CD8-positive, alpha-beta T cell (primary cell): ENCODE measurements at regions of chr15 and their contacts with region 1.

Region 1: DNA sequence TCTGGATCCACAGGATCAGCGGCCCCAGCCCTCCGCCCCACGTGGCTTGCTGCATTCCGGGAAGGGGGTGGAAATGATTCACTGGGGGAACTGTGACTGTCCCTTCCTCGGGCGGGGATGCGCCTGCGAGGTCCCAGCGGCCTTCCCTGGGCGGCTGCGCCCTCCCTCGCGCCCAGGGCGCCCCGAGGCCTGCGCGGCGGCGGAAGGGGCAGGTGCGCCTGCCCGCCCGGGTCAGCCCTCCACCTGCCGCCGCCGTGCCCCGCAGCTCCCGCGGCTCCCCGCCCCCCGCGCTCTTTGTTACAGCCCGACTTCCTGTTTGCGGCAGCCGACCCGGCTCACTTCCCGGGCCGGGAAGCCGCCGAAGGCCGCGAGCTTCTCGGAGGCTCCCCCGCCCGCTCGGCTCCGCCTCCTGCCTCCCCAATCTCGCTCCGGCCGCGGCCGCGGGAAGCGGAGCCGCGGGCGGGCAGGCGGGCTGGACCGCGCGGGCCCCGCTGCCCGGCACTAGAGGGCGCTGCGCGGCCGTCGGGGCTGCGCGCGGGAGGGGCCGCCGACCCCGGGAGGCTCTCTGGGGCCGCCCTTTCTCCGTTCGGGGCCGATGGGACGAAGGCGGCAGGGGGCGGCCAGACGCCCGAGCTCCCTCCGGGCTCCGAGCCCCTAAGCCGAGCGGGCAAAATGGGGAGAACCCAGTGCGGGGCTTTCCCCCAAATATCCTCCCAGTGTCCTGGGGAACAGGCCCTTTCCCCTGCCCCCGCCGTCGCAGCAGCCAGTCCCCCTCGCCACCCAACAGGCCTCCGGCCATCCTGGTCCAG is 11.5 kb upstream of the CHAC1 start:
- DNase-seq: peak in 8 of 9 experiments; percentile 56 to 84 (median 66)
- ATAC-seq: peak; percentile 72
- H3K4me3 ChIP-seq: peak overlapping the region; percentile 69 to 78
- H3K4me3 Mint-ChIP-seq: peak overlapping the region; percentile 86
- H3K27ac ChIP-seq: peak overlapping the region; percentile 30 to 64
- H3K27ac Mint-ChIP-seq: peak overlapping the region; percentile 30
- H3K4me1 ChIP-seq: peaks cover 29% of the 10 kb centered on the region
- H3K4me1 Mint-ChIP-seq: peaks cover 37% of the 10 kb centered on the region
- H3K27me3 ChIP-seq: no peaks in the 10 kb centered on the region
- H3K27me3 Mint-ChIP-seq: no peaks in the 10 kb centered on the region
- CTCF ChIP-seq: peak; percentile 40

Region 2: GRCh38 chr15:40914486-40914885 is 27.2 kb before region 1 on chr15:
- CTCF ChIA-PET with region 1: interaction called, 15 read pairs
- POLR2A ChIA-PET with region 1: no interaction called
- intact Hi-C with region 1: no loop called
- DNase-seq: no peak
- ATAC-seq: no peak
- H3K4me3 ChIP-seq: no peak overlapping the region
- H3K4me3 Mint-ChIP-seq: no peak overlapping the region
- H3K27ac ChIP-seq: no peak overlapping the region
- H3K27ac Mint-ChIP-seq: no peak overlapping the region
- H3K4me1 ChIP-seq: no peaks in the 10 kb centered on the region
- H3K4me1 Mint-ChIP-seq: peaks cover 1% of the 10 kb centered on the region
- H3K27me3 ChIP-seq: no peaks in the 10 kb centered on the region
- H3K27me3 Mint-ChIP-seq: no peaks in the 10 kb centered on the region
- CTCF ChIP-seq: no peak

Region 3: DNA sequence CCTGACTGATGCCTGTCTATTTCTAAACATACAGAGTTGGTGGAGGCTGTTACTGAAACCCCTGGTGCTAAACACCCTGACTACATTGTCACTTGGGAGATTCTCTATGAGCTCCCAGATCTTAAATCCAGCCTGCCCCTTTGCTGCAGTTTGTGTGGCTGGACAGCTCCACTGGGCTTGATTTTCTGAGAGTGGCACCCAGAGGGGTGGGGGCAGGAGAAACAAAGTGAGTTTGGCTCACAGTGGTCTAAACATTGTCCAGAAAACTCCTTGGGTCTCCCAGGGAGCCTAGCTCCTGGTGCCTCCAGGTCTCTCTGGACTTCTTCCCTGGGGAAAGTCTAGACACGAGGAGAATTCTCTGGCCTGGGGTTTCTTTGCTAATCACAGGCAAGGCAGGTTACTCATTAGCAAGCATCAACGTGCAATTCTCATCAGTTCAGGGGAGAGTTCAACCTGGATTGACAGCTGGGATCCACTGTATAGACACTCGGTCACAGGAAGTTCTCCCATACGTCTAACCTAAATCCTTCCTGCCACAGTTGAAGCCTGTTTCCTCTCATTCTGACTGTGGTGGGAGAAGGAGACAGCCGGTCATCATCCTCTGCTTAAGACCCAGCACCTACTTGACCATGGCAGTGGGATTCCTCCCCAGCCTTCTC is 19.7 kb before region 1 on chr15:
- CTCF ChIA-PET with region 1: interaction called, 69 read pairs
- POLR2A ChIA-PET with region 1: interaction called, 16 read pairs
- intact Hi-C with region 1: loop called in 1 of 2 experiments (anchors 2 kb)
- DNase-seq: no peak
- ATAC-seq: no peak
- H3K4me3 ChIP-seq: no peak overlapping the region
- H3K4me3 Mint-ChIP-seq: no peak overlapping the region
- H3K27ac ChIP-seq: no peak overlapping the region
- H3K27ac Mint-ChIP-seq: no peak overlapping the region
- H3K4me1 ChIP-seq: peaks cover 19% of the 10 kb centered on the region
- H3K4me1 Mint-ChIP-seq: peaks cover 18% of the 10 kb centered on the region
- H3K27me3 ChIP-seq: peaks cover 18 to 21% of the 10 kb centered on the region in 2 experiments
- H3K27me3 Mint-ChIP-seq: peaks cover 23% of the 10 kb centered on the region
- CTCF ChIP-seq: no peak

Region 4: DNA sequence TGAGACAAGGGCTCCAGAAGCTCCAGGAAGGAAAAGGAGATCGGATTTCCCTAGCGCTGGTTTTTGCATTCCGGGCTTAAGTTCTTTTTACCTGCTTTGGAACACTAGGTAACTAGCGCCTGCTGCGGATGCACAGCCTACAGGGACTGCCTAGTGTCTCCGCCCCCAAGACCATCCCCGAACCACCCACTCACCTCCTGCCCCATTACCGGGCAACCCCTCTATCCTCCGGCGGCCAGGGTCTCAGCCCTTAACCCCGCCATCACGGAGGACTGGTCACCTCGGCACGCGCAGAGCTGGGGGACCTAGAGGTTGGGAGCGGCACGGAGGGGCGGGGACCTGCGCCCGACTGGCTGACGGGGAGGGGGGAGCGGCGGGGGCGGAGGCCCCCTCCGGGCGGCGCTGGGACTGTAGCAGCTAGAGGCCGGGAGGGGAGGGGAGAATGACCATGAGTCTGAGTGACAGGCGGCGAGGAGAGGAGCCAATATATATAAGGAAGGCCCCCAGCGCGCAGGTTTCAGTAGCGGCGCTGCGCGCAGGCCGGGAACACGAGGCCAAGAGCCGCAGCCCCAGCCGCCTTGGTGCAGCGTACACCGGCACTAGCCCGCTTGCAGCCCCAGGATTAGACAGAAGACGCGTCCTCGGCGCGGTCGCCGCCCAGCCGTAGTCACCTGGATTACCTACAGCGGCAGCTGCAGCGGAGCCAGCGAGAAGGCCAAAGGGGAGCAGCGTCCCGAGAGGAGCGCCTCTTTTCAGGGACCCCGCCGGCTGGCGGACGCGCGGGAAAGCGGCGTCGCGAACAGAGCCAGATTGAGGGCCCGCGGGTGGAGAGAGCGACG is 12.7 kb before region 1 on chr15 and contains the start of gene DLL4:
- CTCF ChIA-PET with region 1: interaction called, 69 read pairs
- POLR2A ChIA-PET with region 1: interaction called, 16 read pairs
- intact Hi-C with region 1: loop called in 1 of 2 experiments (anchors 2 kb)
- DNase-seq: peak in 4 of 9 experiments; percentile 37 to 59 (median 50)
- ATAC-seq: peak; percentile 50
- H3K4me3 ChIP-seq: peak within 1 kb of the TSS; percentile 38 to 63
- H3K4me3 Mint-ChIP-seq: peak within 1 kb of the TSS; percentile 83
- H3K27ac ChIP-seq: no peak within 1 kb of the TSS
- H3K27ac Mint-ChIP-seq: no peak within 1 kb of the TSS
- H3K4me1 ChIP-seq: peaks cover 60% of the 10 kb centered on the region
- H3K4me1 Mint-ChIP-seq: peaks cover 51% of the 10 kb centered on the region
- H3K27me3 ChIP-seq: peaks cover 44 to 62% of the 10 kb centered on the region in 2 experiments
- H3K27me3 Mint-ChIP-seq: peaks cover 63% of the 10 kb centered on the region
- CTCF ChIP-seq: no peak
- total RNA-seq, gene DLL4: 0.08 TPM

Region 5: GRCh38 chr15:40952901-40953712 is 11.4 kb after region 1 on chr15 and contains the start of gene CHAC1:
- CTCF ChIA-PET with region 1: interaction called, 24 read pairs
- POLR2A ChIA-PET with region 1: interaction called, 28 read pairs
- intact Hi-C with region 1: loop called (anchors 1 kb)
- DNase-seq: peak; percentile 84 to 97 (median 94)
- ATAC-seq: peak; percentile 96
- H3K4me3 ChIP-seq: peak within 1 kb of the TSS; percentile 68 to 73
- H3K4me3 Mint-ChIP-seq: peak within 1 kb of the TSS; percentile 93
- H3K27ac ChIP-seq: peak within 1 kb of the TSS in 1 of 2 experiments; percentile 43
- H3K27ac Mint-ChIP-seq: peak within 1 kb of the TSS; percentile 73
- H3K4me1 ChIP-seq: peaks cover 12% of the 10 kb centered on the region
- H3K4me1 Mint-ChIP-seq: peaks cover 16% of the 10 kb centered on the region
- H3K27me3 ChIP-seq: no peaks in the 10 kb centered on the region
- H3K27me3 Mint-ChIP-seq: no peaks in the 10 kb centered on the region
- CTCF ChIP-seq: peak; percentile 20
- total RNA-seq, gene CHAC1: 0.22 to 0.69 TPM

Region 6: DNA sequence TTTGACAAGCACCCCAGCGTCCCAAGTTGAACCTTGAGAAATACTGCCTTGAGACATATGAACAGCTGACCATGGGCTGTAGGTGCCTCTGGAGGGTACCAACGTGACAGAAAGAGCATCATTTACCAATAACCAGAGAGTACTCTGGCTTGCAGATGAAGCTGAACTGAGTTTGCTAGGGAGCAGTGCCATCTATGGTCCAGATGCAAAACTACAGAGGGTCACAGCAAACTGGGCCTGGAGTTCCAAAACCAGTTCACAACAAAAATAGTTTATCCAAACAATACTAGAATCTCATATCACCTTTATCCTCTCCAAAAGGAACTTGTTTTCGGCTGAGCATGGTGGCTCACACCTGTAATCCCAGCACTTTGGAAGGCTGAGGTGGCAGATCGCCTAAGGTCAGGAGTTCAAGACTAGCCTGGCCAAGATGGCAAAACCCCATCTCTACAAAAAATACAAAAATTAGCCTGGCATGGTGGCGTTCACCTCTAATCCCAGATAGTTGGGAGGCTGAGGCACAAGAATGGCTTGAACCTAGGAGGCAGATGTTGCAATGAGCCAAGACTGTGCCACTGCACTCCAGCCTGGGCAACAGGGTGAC is 80.9 kb after region 1 on chr15:
- CTCF ChIA-PET with region 1: interaction called, 13 read pairs
- POLR2A ChIA-PET with region 1: no interaction called
- intact Hi-C with region 1: no loop called
- DNase-seq: peak; percentile 1 to 65 (median 32)
- ATAC-seq: peak; percentile 72
- H3K4me3 ChIP-seq: no peak overlapping the region
- H3K4me3 Mint-ChIP-seq: no peak overlapping the region
- H3K27ac ChIP-seq: no peak overlapping the region
- H3K27ac Mint-ChIP-seq: no peak overlapping the region
- H3K4me1 ChIP-seq: no peaks in the 10 kb centered on the region
- H3K4me1 Mint-ChIP-seq: peaks cover 1% of the 10 kb centered on the region
- H3K27me3 ChIP-seq: no peaks in the 10 kb centered on the region
- H3K27me3 Mint-ChIP-seq: no peaks in the 10 kb centered on the region
- CTCF ChIP-seq: peak; percentile 66

Region 7: DNA sequence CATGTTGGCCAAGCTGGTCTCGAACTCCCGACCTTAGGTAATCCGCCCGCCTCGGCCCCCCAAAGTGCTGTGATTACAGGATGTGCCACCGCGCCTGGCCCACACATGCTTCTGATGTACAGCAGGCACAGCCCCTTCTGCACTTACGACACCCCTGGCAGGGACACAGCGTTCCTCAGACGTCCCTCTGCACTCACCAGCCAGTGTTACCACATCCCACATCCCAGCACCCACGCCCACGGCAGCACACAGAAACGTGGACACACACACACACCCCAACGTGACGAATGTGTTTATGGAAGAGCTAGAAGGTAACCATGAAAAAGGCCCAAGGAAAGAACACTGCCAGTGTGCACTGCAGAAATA is 602.9 kb after region 1 on chr15:
- CTCF ChIA-PET with region 1: no interaction called
- POLR2A ChIA-PET with region 1: no interaction called
- intact Hi-C with region 1: loop called in 1 of 2 experiments (anchors 5 kb)
- DNase-seq: peak in 7 of 9 experiments; percentile 16 to 61 (median 55)
- ATAC-seq: peak; percentile 30
- H3K4me3 ChIP-seq: peak overlapping the region; percentile 88 to 95
- H3K4me3 Mint-ChIP-seq: peak overlapping the region; percentile 91
- H3K27ac ChIP-seq: peak overlapping the region in 1 of 2 experiments; percentile 64
- H3K27ac Mint-ChIP-seq: peak overlapping the region; percentile 95
- H3K4me1 ChIP-seq: peaks cover 8% of the 10 kb centered on the region
- H3K4me1 Mint-ChIP-seq: peaks cover 18% of the 10 kb centered on the region
- H3K27me3 ChIP-seq: no peaks in the 10 kb centered on the region
- H3K27me3 Mint-ChIP-seq: no peaks in the 10 kb centered on the region
- CTCF ChIP-seq: no peak